AG04449 (cell line): ENCODE measurements at regions of chr17 and their contacts with region 1.

Region 1: DNA sequence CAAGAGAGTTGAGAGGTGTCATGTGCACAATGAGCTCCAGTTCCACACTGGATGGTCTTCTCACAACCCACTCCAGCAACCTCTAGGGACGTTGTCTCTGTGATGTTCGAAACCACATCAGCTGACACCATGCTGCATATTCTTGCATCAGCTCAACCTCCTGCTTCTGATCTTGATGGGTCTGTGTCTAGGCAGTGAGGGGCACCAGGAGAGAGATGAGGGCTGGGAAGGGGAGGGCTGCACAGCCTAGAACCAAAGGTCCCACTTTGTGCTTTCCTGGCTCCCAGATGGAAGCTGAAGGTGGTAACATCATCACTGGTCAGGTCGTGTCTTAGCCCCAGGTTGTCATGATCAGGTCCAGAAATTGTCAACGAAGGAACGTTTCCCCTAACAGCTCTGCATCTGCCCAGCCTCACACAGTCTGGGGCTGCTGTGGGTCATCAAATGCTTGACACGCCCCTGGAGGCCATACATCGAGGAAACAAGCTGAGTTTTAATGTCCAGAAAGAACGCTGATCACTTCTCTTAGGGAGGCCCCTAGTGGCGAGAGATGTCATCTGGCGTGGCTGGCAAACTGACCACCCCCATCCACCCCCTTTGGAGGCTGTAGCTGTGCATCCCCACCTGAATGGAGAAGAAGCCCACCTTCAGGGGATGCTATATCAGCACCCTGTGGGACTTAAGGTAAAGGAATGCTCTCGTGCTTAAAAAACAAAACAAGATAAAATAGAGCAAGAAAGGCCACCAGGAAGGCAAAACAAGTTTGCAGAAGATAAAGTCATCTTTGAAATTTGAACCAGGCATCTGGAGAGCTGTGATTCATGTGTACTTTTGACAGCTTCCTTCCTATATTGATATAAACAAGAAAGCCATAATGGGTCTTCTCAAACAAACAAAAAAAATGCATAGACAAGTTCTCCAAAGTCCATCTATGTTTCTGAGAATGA is 58.3 kb downstream of the WIPI1 start:
- DNase-seq: peak; percentile 23
- H3K4me3 ChIP-seq: no peak overlapping the region
- CTCF ChIP-seq: peak; percentile 84

Region 2: DNA sequence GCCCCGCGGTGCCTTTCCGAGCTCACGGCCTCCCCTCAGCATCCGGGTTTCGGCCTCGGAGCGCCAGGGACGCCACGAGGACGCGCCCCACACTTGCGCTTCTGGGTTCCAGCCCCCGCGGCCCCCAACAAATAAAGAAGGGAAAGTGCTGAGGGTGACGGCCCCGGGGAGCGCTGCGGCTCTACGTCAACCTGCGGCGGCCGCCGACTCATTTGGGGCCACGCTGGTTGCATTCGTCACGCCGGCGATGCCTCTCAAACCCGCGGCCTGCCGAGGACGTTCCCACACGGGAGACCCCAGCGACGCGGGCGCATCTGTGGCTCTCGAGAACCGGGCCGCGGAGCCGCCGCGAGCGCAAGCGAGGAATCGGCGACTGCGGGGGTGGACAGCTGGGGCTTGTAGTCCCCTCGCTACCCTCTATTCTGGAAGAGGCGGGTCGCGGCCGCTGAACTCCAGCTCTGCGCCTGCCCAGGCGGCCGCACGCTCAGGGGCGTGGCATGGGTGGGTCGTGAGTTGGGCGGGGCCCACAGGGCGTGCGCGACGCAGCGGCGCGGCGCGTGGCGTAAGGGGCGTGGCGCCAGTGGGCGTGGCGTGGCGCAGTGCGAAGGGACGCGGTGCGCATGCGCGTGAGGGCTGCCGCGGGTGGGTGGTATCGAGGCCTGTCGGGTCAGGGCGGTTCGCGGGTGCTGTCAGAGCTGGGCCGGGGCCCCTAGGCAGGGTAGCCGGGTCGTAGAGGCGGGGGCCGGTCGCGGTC is 151.3 kb before region 1 on chr17 and contains the start of gene AMZ2:
- CTCF ChIA-PET with region 1: interaction called, 22 read pairs
- POLR2A ChIA-PET with region 1: no interaction called
- DNase-seq: peak; percentile 34
- H3K4me3 ChIP-seq: peak within 1 kb of the TSS; percentile 80
- CTCF ChIP-seq: no peak

Region 3: DNA sequence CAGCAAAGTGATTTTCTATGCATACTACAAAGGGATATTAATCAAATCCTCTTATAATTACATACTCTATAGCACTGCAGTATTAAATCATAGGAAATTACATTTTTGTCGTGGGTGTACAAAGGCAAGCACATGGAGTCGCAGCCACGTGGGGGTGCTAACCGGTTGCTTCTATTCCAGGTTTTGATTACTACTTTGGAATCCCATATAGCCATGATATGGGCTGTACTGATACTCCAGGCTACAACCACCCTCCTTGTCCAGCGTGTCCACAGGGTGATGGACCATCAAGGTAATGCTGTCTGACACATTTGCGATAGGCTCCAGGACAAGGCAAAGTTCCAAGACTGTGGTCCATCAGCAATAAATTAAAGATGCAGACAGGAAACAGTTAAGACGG is 47.6 kb before region 1 on chr17:
- CTCF ChIA-PET with region 1: interaction called, 25 read pairs
- POLR2A ChIA-PET with region 1: interaction called, 4 read pairs
- DNase-seq: no peak
- H3K4me3 ChIP-seq: no peak overlapping the region
- CTCF ChIP-seq: peak; percentile 28

Region 4: GRCh38 chr17:68377862-68378770 is 20.8 kb before region 1 on chr17:
- CTCF ChIA-PET with region 1: interaction called, 133 read pairs
- POLR2A ChIA-PET with region 1: no interaction called
- DNase-seq: no peak
- H3K4me3 ChIP-seq: peak overlapping the region; percentile 15; the same call in 1 of the 2 replicates
- CTCF ChIP-seq: no peak

Region 5: GRCh38 chr17:68435876-68436842 is 37.2 kb after region 1 on chr17:
- CTCF ChIA-PET with region 1: interaction called, 63 read pairs
- POLR2A ChIA-PET with region 1: no interaction called
- DNase-seq: no peak
- H3K4me3 ChIP-seq: no peak overlapping the region
- CTCF ChIP-seq: peak; percentile 95

Region 6: DNA sequence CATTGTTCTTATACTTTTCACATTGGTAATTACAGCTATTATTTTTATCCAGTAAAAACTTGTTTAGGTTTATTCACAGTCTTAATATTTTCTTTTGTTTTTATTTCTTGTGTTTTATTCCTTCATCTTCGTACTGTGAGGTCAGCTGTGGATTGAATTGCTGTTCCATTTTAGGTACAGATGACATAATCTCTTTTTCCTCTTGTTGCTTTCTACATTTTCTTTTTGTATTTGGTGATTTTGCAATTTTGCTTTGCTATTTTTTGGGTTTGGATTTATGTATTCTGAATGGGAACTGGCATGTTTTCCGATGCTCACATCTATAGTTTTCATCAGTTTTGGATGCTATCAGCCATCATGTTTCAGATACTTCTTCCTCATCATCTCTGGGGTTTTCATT is 80.2 kb after region 1 on chr17:
- CTCF ChIA-PET with region 1: no interaction called
- POLR2A ChIA-PET with region 1: no interaction called
- DNase-seq: no peak
- H3K4me3 ChIP-seq: no peak overlapping the region
- CTCF ChIP-seq: no peak

Region 7: DNA sequence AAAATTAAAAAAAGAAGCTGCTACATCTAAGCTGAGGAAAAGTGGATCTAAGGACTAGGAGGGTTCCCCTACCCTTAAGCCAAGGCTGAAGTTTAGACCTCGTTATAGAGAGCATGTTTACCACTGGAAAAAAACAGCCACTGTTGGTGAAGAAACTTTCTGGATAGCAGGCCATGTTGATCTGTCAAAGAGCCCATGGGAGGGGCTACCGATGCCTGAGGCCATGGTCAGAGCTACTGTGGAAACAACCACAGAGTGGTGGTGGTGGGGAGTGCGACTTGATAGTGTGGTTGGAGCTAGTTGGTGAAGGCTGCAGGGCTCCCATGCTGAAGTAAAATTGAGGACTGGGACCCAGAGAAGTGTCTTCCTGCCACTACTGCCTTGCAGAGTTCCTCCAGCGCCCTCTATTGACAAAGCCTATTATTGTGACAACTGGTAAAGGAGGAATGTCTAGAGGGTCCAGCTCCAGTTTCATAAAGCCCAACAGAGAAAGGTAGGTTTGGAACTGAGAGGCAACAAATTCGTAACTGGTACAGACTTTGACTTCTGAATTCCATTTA is 214.9 kb after region 1 on chr17:
- CTCF ChIA-PET with region 1: no interaction called
- POLR2A ChIA-PET with region 1: no interaction called
- DNase-seq: no peak
- H3K4me3 ChIP-seq: no peak overlapping the region
- CTCF ChIP-seq: peak; percentile 33